ENCODE measurements at regions of chr14 and their contacts with region 1.

Region 1: DNA sequence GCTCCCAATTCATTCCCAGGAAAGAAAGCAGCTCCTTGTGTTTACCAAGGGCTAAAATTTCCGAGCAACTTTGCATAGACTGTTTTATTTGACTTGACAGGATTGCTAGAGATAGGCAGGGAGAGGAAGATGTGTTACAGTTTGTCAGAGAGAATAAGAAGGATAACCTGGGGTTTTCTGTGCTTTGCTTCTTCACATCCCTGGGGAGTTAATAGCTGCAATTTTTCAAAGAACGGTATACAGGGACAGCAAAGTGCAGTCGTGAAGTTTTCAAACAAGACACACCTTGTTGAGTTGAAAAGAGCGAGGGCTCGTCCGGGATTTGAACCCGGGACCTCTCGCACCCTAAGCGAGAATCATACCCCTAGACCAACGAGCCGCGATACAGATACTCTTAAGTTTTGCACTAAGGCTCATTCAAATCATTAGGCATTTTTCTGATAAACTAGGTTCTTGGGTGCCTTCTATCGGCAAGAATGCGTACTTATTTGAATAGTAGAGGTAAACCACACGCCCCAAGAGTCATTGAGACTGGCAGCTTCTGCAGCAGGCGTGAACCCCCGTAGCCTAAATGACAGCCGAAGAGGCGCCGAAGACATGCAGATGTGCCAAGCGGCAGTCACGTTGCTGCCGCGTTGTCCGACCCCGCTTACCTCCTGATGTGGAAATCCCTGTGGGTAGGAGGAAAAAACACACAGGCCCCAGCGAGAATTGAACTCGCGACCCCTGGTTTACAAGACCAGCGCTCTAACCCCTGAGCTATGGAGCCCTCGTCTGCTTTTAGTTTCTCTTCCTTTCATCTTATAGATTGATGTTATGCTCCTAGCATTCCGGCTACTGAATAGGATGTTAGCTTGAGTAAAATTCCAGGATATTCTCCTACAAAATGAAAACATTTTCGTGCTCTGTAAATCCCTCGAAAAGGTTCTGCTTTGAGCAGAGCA is 22.2 kb upstream of the RNASE12 start:
- DNase-seq: peak; percentile 66 to 95 (median 71)
- ATAC-seq: peak; percentile 89
- H3K4me3 ChIP-seq: peak overlapping the region; percentile 62
- H3K27ac ChIP-seq: no peak overlapping the region
- H3K4me1 ChIP-seq: peaks cover 5 to 24% of the 10 kb centered on the region in 2 experiments; a peak in 3 of 5 replicates
- H3K27me3 ChIP-seq: no peaks in the 10 kb centered on the region
- CTCF ChIP-seq: peak; percentile 44 to 76 (median 58)
- EP300 ChIP-seq: peak; percentile 28
- POLR2A ChIP-seq: no peak
- RAD21 ChIP-seq: no peak; a peak in 1 of 4 replicates

Region 2: DNA sequence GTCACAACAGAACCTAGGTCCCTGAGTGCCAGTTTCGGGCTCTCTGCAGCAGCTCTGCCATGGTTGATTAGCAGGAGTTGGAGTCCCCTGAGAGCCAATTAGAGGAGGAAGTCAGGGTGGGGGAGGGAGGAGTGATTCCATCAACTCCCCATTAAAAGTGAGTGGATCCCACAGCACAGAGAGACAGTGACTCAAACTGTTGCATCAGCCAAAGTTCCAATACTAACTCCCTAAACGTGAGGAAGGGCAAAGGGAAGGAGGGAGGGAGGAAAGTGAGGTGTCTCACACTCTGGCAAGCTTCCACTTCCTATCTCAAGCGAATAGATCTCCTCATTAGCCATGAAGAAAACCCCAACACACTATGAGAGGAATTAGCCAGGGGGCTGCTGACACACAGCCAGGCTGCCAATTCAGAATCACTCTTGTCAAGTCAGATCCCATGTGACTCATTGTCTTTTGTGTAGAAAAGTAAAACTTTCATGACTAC is 350.7 kb before region 1 on chr14:
- CTCF ChIA-PET with region 1: no interaction called
- POLR2A ChIA-PET with region 1: no interaction called
- in situ Hi-C with region 1: no loop called
- intact Hi-C with region 1: loop called (anchors 5 kb)
- DNase-seq: peak in 3 of 4 experiments; percentile 6 to 40 (median 15)
- ATAC-seq: peak; percentile 73
- H3K4me3 ChIP-seq: no peak overlapping the region
- H3K27ac ChIP-seq: peak overlapping the region; percentile 62; the same call in 1 of the 3 replicates
- H3K4me1 ChIP-seq: peaks cover 0 to 16% of the 10 kb centered on the region in 2 experiments; a peak in 3 of 5 replicates
- H3K27me3 ChIP-seq: no peaks in the 10 kb centered on the region
- CTCF ChIP-seq: no peak
- EP300 ChIP-seq: peak; percentile 57
- POLR2A ChIP-seq: no peak
- RAD21 ChIP-seq: peak in 1 of 2 experiments; percentile 27; a peak in 2 of 4 replicates

Region 3: DNA sequence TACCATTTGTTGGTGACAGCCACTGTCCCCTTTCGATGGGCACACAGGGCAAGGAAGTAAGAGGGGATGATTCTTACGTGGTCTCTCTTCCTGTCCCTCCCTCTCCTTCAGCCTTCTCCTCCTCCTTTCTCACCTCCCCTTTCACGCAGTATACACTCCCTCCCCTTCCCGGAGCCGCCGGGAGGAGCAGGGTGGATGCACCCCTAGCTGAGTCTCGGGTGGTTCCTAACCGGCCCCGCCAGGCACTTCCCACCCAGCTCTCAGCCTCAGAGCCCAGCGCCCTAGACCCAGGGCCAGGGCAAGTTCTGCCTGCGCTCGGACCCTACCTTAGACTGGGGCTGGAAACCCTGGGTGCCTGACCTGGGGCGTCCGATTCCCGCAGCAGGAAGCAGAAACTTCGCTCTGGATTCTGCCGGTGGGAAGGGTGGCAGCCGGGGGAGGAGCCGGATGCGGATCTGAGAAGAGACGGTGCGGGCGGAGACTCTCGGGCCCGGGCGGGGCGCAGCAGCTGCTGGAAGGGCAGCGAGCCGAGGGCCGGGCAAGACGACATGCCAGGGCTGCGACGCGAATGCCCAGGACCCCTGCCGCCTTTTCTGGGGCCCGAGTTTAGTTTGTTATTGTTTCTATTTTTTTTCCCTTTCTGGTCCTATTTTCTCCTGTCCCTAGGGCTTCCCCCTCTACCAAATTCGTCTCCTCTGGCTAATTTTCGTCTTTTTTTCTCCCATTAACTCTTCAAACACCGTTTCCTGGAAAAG is 200.1 kb before region 1 on chr14 and contains the start of gene TEP1:
- CTCF ChIA-PET with region 1: interaction called, 5 read pairs
- POLR2A ChIA-PET with region 1: no interaction called
- in situ Hi-C with region 1: loop called (anchors 10 kb)
- intact Hi-C with region 1: no loop called
- DNase-seq: peak; percentile 60 to 77 (median 66)
- ATAC-seq: peak; percentile 94
- H3K4me3 ChIP-seq: peak within 1 kb of the TSS; percentile 93
- H3K27ac ChIP-seq: peak within 1 kb of the TSS; percentile 73
- H3K4me1 ChIP-seq: peaks cover 6 to 13% of the 10 kb centered on the region in 2 experiments; a peak in 4 of 5 replicates
- H3K27me3 ChIP-seq: no peaks in the 10 kb centered on the region
- CTCF ChIP-seq: no peak
- EP300 ChIP-seq: no peak
- POLR2A ChIP-seq: peak; percentile 77
- RAD21 ChIP-seq: no peak
- polyA plus RNA-seq, gene TEP1: 1.0 to 1.3 TPM

Region 4: DNA sequence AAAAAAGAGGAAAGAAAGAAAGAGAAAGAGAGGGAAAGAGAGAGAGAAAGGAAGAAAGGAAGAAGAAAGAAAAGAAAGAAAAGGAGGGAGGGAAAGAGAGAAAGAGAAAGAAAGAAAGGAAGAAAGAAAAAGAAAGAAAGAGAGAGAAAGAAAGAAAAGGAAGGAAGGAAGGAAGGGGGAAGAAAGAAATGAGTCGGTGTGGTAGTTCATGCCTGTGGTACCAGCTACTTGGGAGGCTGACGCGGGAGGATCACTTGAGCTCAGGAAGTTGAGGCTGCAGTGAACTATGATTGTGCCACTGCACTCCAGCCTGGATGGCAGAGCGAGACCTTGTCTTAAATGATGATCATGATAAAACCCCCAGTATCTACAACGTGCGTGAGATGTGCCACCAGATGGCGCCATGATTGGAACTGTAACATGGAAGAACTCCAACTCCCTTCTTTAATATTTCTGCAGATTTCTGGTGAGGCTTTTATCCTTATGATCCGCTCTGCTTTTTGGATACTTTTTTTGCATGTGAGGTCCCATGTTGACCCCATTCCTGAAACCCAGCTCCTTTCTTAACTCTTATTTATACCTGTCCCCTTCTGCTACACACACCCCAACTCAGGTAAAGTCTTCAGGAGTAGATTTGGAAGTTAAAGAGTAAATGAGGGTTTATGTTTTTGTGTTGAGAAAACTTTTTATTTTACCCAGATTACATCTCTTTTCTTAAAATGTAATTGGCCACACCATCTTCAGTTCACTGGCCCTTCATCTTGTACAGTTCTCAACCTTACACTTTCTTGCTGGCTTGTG is 82.4 kb before region 1 on chr14:
- CTCF ChIA-PET with region 1: interaction called, 14 read pairs
- POLR2A ChIA-PET with region 1: no interaction called
- in situ Hi-C with region 1: no loop called
- intact Hi-C with region 1: no loop called
- DNase-seq: peak; percentile 13 to 75 (median 26)
- ATAC-seq: peak; percentile 82
- H3K4me3 ChIP-seq: no peak overlapping the region
- H3K27ac ChIP-seq: no peak overlapping the region
- H3K4me1 ChIP-seq: no peaks in the 10 kb centered on the region; a peak in 2 of 5 replicates
- H3K27me3 ChIP-seq: no peaks in the 10 kb centered on the region
- CTCF ChIP-seq: peak; percentile 50 to 66 (median 59); a peak in 5 of 6 replicates
- EP300 ChIP-seq: no peak
- POLR2A ChIP-seq: no peak
- RAD21 ChIP-seq: peak; percentile 60 to 72

Region 5: GRCh38 chr14:20624495-20625070 is 11.2 kb after region 1 on chr14:
- CTCF ChIA-PET with region 1: interaction called, 3 read pairs
- POLR2A ChIA-PET with region 1: no interaction called
- in situ Hi-C with region 1: no loop called
- intact Hi-C with region 1: loop called (anchors 1 kb)
- DNase-seq: peak; percentile 18 to 76 (median 40)
- ATAC-seq: peak; percentile 75
- H3K4me3 ChIP-seq: peak overlapping the region; percentile 42
- H3K27ac ChIP-seq: peak overlapping the region; percentile 52; the same call in 2 of the 3 replicates
- H3K4me1 ChIP-seq: peaks cover 8 to 14% of the 10 kb centered on the region in 2 experiments; a peak in 3 of 5 replicates
- H3K27me3 ChIP-seq: peaks cover 4 to 5% of the 10 kb centered on the region in 2 experiments; a peak in 2 of 5 replicates
- CTCF ChIP-seq: no peak
- EP300 ChIP-seq: no peak
- POLR2A ChIP-seq: no peak
- RAD21 ChIP-seq: no peak

Region 6: DNA sequence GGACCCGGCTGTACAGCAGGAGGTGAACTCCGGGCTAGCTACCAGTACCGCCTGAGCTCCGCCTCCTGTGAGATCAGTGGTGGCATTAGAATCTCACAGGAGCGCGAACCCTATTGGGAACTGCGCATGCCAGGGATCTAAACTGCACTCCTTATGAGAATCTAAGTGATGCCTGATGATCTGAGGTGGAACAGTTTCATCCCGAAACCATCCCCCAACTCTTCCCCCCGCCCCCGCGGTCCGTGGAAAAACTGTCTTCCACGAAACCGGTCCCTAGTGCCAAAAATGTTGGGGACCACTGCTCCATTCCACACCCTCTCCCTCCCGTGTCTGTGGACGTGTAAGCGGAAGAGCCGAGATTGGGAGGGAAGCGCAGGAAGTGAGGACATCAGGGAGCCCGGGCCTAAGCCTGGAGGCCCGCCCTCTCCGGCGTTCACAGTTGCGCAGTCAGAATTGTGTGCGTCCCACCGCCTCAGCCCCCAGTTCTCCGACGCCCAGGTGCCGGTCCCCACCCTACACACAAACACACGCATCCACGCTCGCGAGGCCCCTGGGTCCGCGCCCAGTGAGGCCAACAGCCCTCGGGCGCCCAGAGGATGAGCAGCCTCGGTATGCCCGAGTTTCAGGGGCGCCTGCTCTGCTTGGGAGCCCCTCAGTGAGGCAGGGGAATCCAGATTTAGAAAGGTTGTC is 69.2 kb after region 1 on chr14:
- CTCF ChIA-PET with region 1: interaction called, 3 read pairs
- POLR2A ChIA-PET with region 1: interaction called, 3 read pairs
- in situ Hi-C with region 1: no loop called
- intact Hi-C with region 1: loop called (anchors 1 kb)
- DNase-seq: peak; percentile 37 to 83 (median 54)
- ATAC-seq: peak; percentile 83
- H3K4me3 ChIP-seq: peak overlapping the region; percentile 75
- H3K27ac ChIP-seq: peak overlapping the region; percentile 62; the same call in 2 of the 3 replicates
- H3K4me1 ChIP-seq: peaks cover 10 to 13% of the 10 kb centered on the region in 2 experiments; a peak in 3 of 5 replicates
- H3K27me3 ChIP-seq: no peaks in the 10 kb centered on the region
- CTCF ChIP-seq: no peak
- EP300 ChIP-seq: no peak
- POLR2A ChIP-seq: peak; percentile 50; the same call in 1 of the 2 replicates
- RAD21 ChIP-seq: no peak